Mammary epithelial cell (primary cell): ENCODE measurements at regions of chr5 and their contacts with region 1.

Region 1: GRCh38 chr5:93078082-93079038 is 502.7 kb downstream of the NR2F1-AS1 start:
- DNase-seq: peak; percentile 98
- H3K4me3 ChIP-seq: peak overlapping the region in 1 of 3 experiments; percentile 26
- H3K27ac ChIP-seq: peak overlapping the region; percentile 13
- H3K4me1 ChIP-seq: peaks cover 18% of the 10 kb centered on the region
- H3K27me3 ChIP-seq: no peaks in the 10 kb centered on the region
- CTCF ChIP-seq: no peak

Region 2: DNA sequence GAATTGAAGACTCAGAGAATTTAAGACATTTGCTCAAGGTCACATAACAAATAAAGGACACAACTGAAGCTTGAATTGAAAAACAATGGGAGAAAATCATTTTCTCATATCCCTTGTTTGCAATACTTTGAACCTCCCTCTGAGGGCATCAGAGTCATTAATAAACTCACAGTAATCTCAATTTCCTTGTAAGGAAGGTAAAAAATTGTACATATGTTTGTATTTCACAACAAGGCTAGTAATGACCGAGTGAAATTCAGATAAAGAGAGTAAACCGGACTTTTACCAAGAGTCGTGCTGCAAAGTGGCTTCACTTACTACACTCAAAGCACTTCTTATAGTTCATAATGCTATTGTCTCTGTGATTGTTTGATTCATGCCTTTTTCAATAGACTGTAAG is 162.3 kb before region 1 on chr5:
- CTCF ChIA-PET with region 1: no interaction called
- dilution Hi-C with region 1: no loop called
- in situ Hi-C with region 1: no loop called
- intact Hi-C with region 1: loop called (anchors 2 kb)
- DNase-seq: peak; percentile 6
- H3K4me3 ChIP-seq: no peak overlapping the region
- H3K27ac ChIP-seq: no peak overlapping the region
- H3K4me1 ChIP-seq: no peaks in the 10 kb centered on the region
- H3K27me3 ChIP-seq: no peaks in the 10 kb centered on the region
- CTCF ChIP-seq: peak; percentile 17 to 34

Region 3: GRCh38 chr5:93126634-93127033 is 48.3 kb after region 1 on chr5:
- CTCF ChIA-PET with region 1: no interaction called
- dilution Hi-C with region 1: loop called (anchors 5 kb)
- in situ Hi-C with region 1: no loop called
- intact Hi-C with region 1: no loop called
- DNase-seq: no peak
- H3K4me3 ChIP-seq: no peak overlapping the region
- H3K27ac ChIP-seq: no peak overlapping the region
- H3K4me1 ChIP-seq: no peaks in the 10 kb centered on the region
- H3K27me3 ChIP-seq: no peaks in the 10 kb centered on the region
- CTCF ChIP-seq: no peak

Region 4: GRCh38 chr5:93349613-93350012 is 271.3 kb after region 1 on chr5:
- CTCF ChIA-PET with region 1: no interaction called
- dilution Hi-C with region 1: no loop called
- in situ Hi-C with region 1: no loop called
- intact Hi-C with region 1: loop called (anchors 5 kb)
- DNase-seq: peak; percentile 94
- H3K4me3 ChIP-seq: no peak overlapping the region
- H3K27ac ChIP-seq: peak overlapping the region; percentile 34
- H3K4me1 ChIP-seq: peaks cover 24% of the 10 kb centered on the region
- H3K27me3 ChIP-seq: no peaks in the 10 kb centered on the region
- CTCF ChIP-seq: no peak

Region 5: GRCh38 chr5:93789173-93790070 is 711.1 kb after region 1 on chr5:
- CTCF ChIA-PET with region 1: no interaction called
- dilution Hi-C with region 1: no loop called
- in situ Hi-C with region 1: loop called in 1 of 2 experiments (anchors 25 kb)
- intact Hi-C with region 1: no loop called
- DNase-seq: peak; percentile 70
- H3K4me3 ChIP-seq: no peak overlapping the region
- H3K27ac ChIP-seq: no peak overlapping the region
- H3K4me1 ChIP-seq: peaks cover 3% of the 10 kb centered on the region
- H3K27me3 ChIP-seq: no peaks in the 10 kb centered on the region
- CTCF ChIP-seq: no peak

Region 6: GRCh38 chr5:93995126-93995621 is 916.8 kb after region 1 on chr5:
- CTCF ChIA-PET with region 1: no interaction called
- dilution Hi-C with region 1: no loop called
- in situ Hi-C with region 1: no loop called
- intact Hi-C with region 1: no loop called
- DNase-seq: peak; percentile 2
- H3K4me3 ChIP-seq: no peak overlapping the region
- H3K27ac ChIP-seq: no peak overlapping the region
- H3K4me1 ChIP-seq: no peaks in the 10 kb centered on the region
- H3K27me3 ChIP-seq: no peaks in the 10 kb centered on the region
- CTCF ChIP-seq: no peak